ENCODE measurements at regions of chr5 and their contacts with region 1.

Region 1: GRCh38 chr5:87267574-87268125 is at the start of gene RASA1:
- DNase-seq: no peak
- ATAC-seq: peak; percentile 69
- H3K4me3 ChIP-seq: peak within 1 kb of the TSS; percentile 75 to 94 (median 93)
- H3K4me3 Mint-ChIP-seq: peak within 1 kb of the TSS; percentile 100
- H3K27ac ChIP-seq: peak within 1 kb of the TSS; percentile 69 to 73
- H3K27ac Mint-ChIP-seq: peak within 1 kb of the TSS; percentile 96
- H3K4me1 ChIP-seq: peaks cover 16 to 23% of the 10 kb centered on the region in 2 donors
- H3K4me1 Mint-ChIP-seq: peaks cover 33% of the 10 kb centered on the region
- H3K27me3 ChIP-seq: no peaks in the 10 kb centered on the region
- H3K27me3 Mint-ChIP-seq: no peaks in the 10 kb centered on the region
- CTCF ChIP-seq: no peak
- total RNA-seq, gene RASA1: 32.2 TPM in 2 replicates

Region 2: DNA sequence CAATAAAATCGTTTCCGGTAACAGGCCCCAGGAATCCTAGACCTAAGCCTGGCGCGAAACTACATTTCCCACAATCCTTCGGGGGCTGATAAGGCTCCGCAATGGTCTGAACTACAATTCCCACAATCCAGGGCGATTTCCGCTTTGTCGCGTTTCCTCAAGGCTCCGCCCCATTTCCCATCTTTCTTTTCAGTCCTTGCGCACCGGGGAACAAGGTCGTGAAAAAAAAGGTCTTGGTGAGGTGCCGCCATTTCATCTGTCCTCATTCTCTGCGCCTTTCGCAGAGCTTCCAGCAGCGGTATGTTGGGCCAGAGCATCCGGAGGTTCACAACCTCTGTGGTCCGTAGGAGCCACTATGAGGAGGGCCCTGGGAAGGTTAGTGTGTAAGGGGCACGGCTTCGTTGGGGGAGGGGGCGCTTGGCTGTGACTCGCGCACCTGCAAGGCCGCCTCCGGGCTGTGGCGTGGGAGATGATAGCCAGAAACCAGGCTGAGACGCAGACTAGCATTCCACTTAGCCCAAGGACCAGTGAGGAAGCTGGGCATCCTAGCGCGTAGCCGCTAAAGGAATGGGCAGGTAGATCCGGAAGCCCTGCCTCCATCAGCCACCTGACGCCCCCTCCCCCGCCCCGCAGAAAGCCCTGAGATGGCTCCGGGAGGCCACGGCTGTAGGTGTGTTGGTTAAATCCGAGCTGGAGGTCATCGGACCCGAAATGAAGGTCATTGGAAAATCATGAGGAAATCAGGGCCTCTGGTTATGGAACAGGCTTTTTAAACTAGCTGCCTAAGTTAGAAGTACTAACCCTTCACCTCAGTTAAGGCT is 649.7 kb before region 1 on chr5 and contains the start of gene COX7C:
- CTCF ChIA-PET with region 1: no interaction called
- POLR2A ChIA-PET with region 1: no interaction called
- intact Hi-C with region 1: loop called (anchors 1 kb)
- DNase-seq: peak; percentile 97
- ATAC-seq: peak; percentile 98
- H3K4me3 ChIP-seq: peak within 1 kb of the TSS; percentile 83 to 99 (median 94)
- H3K4me3 Mint-ChIP-seq: peak within 1 kb of the TSS; percentile 100
- H3K27ac ChIP-seq: peak within 1 kb of the TSS; percentile 90 to 95
- H3K27ac Mint-ChIP-seq: peak within 1 kb of the TSS; percentile 99
- H3K4me1 ChIP-seq: peaks cover 15 to 18% of the 10 kb centered on the region in 2 donors
- H3K4me1 Mint-ChIP-seq: peaks cover 25% of the 10 kb centered on the region
- H3K27me3 ChIP-seq: peaks cover 0 to 15% (median 3%) of the 10 kb centered on the region in 4 experiments
- H3K27me3 Mint-ChIP-seq: peaks cover 16% of the 10 kb centered on the region
- CTCF ChIP-seq: no peak
- total RNA-seq, gene COX7C: 320 and 338 TPM in 2 replicates

Region 3: DNA sequence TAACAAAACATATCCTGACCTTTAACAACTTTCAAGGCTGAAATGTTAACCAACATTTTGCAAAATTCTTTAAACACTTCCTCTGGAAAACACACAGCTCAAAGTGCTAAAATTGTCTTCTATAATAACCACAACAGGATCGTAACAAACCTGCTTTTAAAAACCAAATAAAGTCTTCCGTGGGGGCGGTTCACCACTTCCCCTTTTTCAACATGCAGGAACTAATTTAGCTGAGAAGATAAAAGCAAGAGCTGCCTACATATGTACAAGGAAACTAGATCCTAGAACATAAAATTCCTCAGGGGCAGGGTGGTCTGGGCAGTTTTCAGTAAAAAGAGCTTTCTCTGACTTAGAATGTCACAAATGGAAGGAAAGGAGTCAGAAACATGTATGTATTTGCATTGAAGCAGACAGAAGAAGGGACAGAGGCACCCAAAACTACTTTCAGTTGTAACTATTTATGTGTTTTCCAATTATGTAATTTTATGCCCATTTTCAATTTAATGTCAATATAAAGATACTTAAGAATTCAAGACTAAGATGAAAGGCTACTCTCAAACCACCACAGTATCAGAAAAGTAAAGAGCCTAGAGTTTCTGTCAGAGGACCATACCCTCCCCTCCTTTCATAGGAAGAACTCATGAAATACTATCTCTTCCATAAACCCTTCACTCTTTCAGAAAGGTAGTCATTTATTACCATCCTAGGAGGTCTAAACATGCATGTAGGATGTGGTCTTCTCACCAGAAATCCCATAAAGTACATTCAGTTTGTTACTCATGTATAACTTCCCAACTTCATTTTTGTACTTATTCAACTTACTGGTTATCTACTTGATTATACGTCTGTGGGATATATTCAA is 185.9 kb before region 1 on chr5:
- CTCF ChIA-PET with region 1: no interaction called
- POLR2A ChIA-PET with region 1: no interaction called
- intact Hi-C with region 1: loop called (anchors 1 kb)
- DNase-seq: peak; percentile 76
- ATAC-seq: peak; percentile 90
- H3K4me3 ChIP-seq: peak overlapping the region in 4 of 5 experiments; percentile 1 to 43 (median 17)
- H3K4me3 Mint-ChIP-seq: peak overlapping the region; percentile 75
- H3K27ac ChIP-seq: peak overlapping the region; percentile 68 to 69
- H3K27ac Mint-ChIP-seq: peak overlapping the region; percentile 89
- H3K4me1 ChIP-seq: peaks cover 37 to 53% of the 10 kb centered on the region in 2 donors
- H3K4me1 Mint-ChIP-seq: peaks cover 53% of the 10 kb centered on the region
- H3K27me3 ChIP-seq: no peaks in the 10 kb centered on the region
- H3K27me3 Mint-ChIP-seq: no peaks in the 10 kb centered on the region
- CTCF ChIP-seq: no peak

Region 4: GRCh38 chr5:87210743-87211430 is 56.8 kb before region 1 on chr5:
- CTCF ChIA-PET with region 1: no interaction called
- POLR2A ChIA-PET with region 1: no interaction called
- intact Hi-C with region 1: no loop called
- DNase-seq: no peak
- ATAC-seq: no peak
- H3K4me3 ChIP-seq: no peak overlapping the region
- H3K4me3 Mint-ChIP-seq: no peak overlapping the region
- H3K27ac ChIP-seq: no peak overlapping the region
- H3K27ac Mint-ChIP-seq: no peak overlapping the region
- H3K4me1 ChIP-seq: no peaks in the 10 kb centered on the region
- H3K4me1 Mint-ChIP-seq: no peaks in the 10 kb centered on the region
- H3K27me3 ChIP-seq: no peaks in the 10 kb centered on the region
- H3K27me3 Mint-ChIP-seq: no peaks in the 10 kb centered on the region
- CTCF ChIP-seq: no peak

Region 5: DNA sequence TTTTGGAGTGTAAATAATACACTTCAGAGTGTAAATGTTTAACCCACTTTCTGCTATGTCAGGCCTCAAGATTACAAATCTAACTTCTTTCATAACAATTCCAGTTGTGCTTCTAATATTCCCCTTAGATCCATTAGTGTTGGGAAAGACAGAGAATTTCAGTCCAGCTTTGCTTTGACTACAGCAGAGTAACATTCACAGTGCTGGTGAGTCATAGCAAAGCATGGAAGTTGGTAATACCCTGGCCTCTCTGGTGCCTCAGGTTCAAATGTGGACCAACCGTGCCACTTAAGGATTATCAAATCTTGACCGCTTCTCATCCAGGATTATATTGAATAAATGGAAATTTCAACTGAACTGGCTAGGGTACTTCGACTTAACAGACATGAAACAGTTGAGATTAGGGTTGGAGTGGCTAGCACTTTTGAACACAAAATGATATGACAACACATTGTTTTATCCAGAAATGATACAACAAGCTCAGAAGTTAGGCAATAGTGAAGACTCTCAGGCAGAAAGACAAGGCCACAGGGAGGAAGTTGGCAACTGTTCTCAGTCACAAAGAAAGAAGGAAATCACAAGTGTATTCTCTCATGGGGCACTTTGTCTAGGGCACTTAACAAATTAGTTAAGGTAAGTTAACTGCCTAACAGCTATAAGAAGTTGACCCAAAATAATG is 24.3 kb before region 1 on chr5:
- CTCF ChIA-PET with region 1: no interaction called
- POLR2A ChIA-PET with region 1: no interaction called
- intact Hi-C with region 1: no loop called
- DNase-seq: no peak
- ATAC-seq: no peak
- H3K4me3 ChIP-seq: no peak overlapping the region
- H3K4me3 Mint-ChIP-seq: no peak overlapping the region
- H3K27ac ChIP-seq: no peak overlapping the region
- H3K27ac Mint-ChIP-seq: no peak overlapping the region
- H3K4me1 ChIP-seq: no peaks in the 10 kb centered on the region
- H3K4me1 Mint-ChIP-seq: peaks cover 3% of the 10 kb centered on the region
- H3K27me3 ChIP-seq: no peaks in the 10 kb centered on the region
- H3K27me3 Mint-ChIP-seq: no peaks in the 10 kb centered on the region
- CTCF ChIP-seq: no peak

Region 6: GRCh38 chr5:87298692-87299362 is 31.2 kb after region 1 on chr5:
- CTCF ChIA-PET with region 1: interaction called, 4 read pairs
- POLR2A ChIA-PET with region 1: no interaction called
- intact Hi-C with region 1: loop called (anchors 2 kb)
- DNase-seq: no peak
- ATAC-seq: no peak
- H3K4me3 ChIP-seq: no peak overlapping the region
- H3K4me3 Mint-ChIP-seq: no peak overlapping the region
- H3K27ac ChIP-seq: peak overlapping the region in 1 of 2 donors; percentile 36
- H3K27ac Mint-ChIP-seq: no peak overlapping the region
- H3K4me1 ChIP-seq: peaks cover 19 to 30% of the 10 kb centered on the region in 2 donors
- H3K4me1 Mint-ChIP-seq: peaks cover 61% of the 10 kb centered on the region
- H3K27me3 ChIP-seq: no peaks in the 10 kb centered on the region
- H3K27me3 Mint-ChIP-seq: no peaks in the 10 kb centered on the region
- CTCF ChIP-seq: no peak

Region 7: GRCh38 chr5:87412630-87413342 is 145.1 kb after region 1 on chr5 and contains the start of gene CCNH:
- CTCF ChIA-PET with region 1: no interaction called
- POLR2A ChIA-PET with region 1: no interaction called
- intact Hi-C with region 1: loop called (anchors 1 kb)
- DNase-seq: peak; percentile 98
- ATAC-seq: peak; percentile 99
- H3K4me3 ChIP-seq: peak within 1 kb of the TSS; percentile 76 to 100 (median 84)
- H3K4me3 Mint-ChIP-seq: peak within 1 kb of the TSS; percentile 93
- H3K27ac ChIP-seq: peak within 1 kb of the TSS; percentile 89 to 96
- H3K27ac Mint-ChIP-seq: peak within 1 kb of the TSS; percentile 93
- H3K4me1 ChIP-seq: peaks cover 13 to 20% of the 10 kb centered on the region in 2 donors
- H3K4me1 Mint-ChIP-seq: peaks cover 30% of the 10 kb centered on the region
- H3K27me3 ChIP-seq: no peaks in the 10 kb centered on the region
- H3K27me3 Mint-ChIP-seq: no peaks in the 10 kb centered on the region
- CTCF ChIP-seq: no peak
- total RNA-seq, gene CCNH: 120 and 137 TPM in 2 replicates

Measured in B cell (primary cell).